Gastrocnemius medialis (tissue), 4 donors: ENCODE measurements at regions of chr12 and their contacts with region 1.

Region 1: DNA sequence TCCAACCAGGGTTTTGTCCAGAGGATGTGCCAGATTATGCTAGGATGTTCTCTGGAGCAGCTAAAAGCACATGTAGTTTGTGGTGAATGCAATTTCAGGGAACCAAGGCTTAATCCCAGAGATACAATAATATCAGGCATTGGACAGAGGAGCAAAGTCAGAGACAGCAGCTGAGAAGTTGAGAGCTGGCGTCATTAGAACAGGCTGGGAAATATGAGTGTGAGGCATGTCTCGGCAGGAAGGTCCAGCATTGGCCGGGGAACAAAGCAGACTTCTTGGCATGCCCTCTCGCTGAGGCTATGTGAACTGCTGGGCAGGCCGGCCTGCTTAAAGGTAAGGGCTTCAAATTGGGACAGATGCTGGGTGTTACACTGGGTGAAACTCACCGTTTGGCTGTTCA is 125.4 kb downstream of the CAND1 start:
- DNase-seq: peak; percentile 77 to 86
- ATAC-seq: peak; percentile 90 to 97
- H3K4me3 ChIP-seq: no peak overlapping the region
- H3K27ac ChIP-seq: peak overlapping the region; percentile 64 to 79 (median 72)
- H3K4me1 ChIP-seq: peaks cover 22 to 36% of the 10 kb centered on the region in 2 donors
- H3K27me3 ChIP-seq: no peaks in the 10 kb centered on the region
- CTCF ChIP-seq: peak in 3 of 5 experiments; percentile 36 to 63 (median 60)
- POLR2A ChIP-seq: no peak

Region 2: GRCh38 chr12:67415473-67415872 is 20.9 kb after region 1 on chr12:
- in situ Hi-C with region 1: no loop called
- intact Hi-C with region 1: loop called (anchors 2 kb)
- DNase-seq: no peak
- ATAC-seq: peak in 1 of 2 donors; percentile 37
- H3K4me3 ChIP-seq: no peak overlapping the region
- H3K27ac ChIP-seq: no peak overlapping the region
- H3K4me1 ChIP-seq: peaks cover 21 to 27% of the 10 kb centered on the region in 2 donors
- H3K27me3 ChIP-seq: no peaks in the 10 kb centered on the region
- CTCF ChIP-seq: peak in 2 of 5 experiments; percentile 29 to 40
- POLR2A ChIP-seq: no peak